ENCODE measurements at regions of chr9 and their contacts with region 1.

Region 1: GRCh38 chr9:29830821-29831220 is 2257.5 kb upstream of the C9orf72 start:
- DNase-seq: peak; percentile 37
- H3K4me3 ChIP-seq: no peak overlapping the region
- H3K27ac ChIP-seq: no peak overlapping the region
- H3K4me1 ChIP-seq: no peaks in the 10 kb centered on the region
- H3K27me3 ChIP-seq: peaks cover 2% of the 10 kb centered on the region
- CTCF ChIP-seq: peak; percentile 54 to 71

Region 2: DNA sequence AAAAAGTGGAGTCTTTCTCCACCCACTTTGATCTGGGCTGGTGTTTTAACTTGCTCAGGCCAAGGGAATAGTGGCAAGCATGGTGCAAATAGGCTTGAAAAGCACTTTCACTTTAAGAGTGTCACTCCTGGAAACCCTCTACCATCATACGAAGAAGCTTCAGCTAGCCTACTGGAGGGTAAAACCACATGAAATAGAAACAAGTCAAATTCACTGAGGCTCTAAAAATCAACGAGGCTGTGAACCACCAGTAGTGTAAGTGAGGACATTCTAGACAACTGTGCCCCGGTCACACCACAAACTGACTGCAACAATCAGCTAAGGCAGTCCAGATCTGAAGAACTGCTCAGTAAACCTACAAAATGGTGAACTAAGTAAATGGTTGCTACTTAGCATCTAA is 108.7 kb after region 1 on chr9:
- CTCF ChIA-PET with region 1: no interaction called
- dilution Hi-C with region 1: no loop called
- in situ Hi-C with region 1: no loop called
- intact Hi-C with region 1: no loop called
- DNase-seq: no peak
- H3K4me3 ChIP-seq: no peak overlapping the region
- H3K27ac ChIP-seq: no peak overlapping the region
- H3K4me1 ChIP-seq: no peaks in the 10 kb centered on the region
- H3K27me3 ChIP-seq: no peaks in the 10 kb centered on the region
- CTCF ChIP-seq: no peak

Region 3: GRCh38 chr9:30774326-30774725 is 943.5 kb after region 1 on chr9:
- CTCF ChIA-PET with region 1: no interaction called
- dilution Hi-C with region 1: no loop called
- in situ Hi-C with region 1: no loop called
- intact Hi-C with region 1: loop called (anchors 10 kb)
- DNase-seq: no peak
- H3K4me3 ChIP-seq: no peak overlapping the region
- H3K27ac ChIP-seq: no peak overlapping the region
- H3K4me1 ChIP-seq: no peaks in the 10 kb centered on the region
- H3K27me3 ChIP-seq: no peaks in the 10 kb centered on the region
- CTCF ChIP-seq: no peak

Region 4: DNA sequence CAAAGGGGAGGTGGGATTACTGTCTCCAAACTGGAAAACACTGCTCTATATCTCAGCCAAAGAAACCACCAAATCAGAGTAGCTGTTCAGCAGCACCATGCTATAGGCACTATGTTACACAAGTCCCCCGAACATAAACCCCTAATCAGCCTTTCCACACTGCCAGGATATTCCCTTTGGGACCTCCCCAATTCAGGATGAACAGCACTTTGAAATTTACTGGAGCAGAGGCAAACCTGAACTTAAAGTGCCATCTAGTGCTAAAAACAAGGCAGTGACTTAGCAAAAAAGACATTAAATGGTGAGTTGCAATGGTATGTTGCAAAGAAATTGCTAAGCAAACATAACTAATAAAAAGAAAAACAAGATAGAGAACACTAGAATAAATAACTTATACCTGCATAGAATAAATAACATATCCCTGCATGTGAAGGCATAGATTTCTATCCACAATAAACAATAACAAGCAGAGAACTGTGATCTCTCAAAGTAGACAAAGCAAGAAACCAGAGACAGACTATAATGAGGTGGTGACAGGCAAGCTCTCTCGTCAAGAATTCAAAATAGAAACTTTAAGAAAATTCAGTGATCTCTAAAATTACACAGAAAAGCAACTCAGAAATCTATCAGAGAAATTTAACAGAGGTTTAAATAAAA is 1969.3 kb after region 1 on chr9:
- CTCF ChIA-PET with region 1: no interaction called
- dilution Hi-C with region 1: no loop called
- in situ Hi-C with region 1: loop called in 1 of 2 experiments (anchors 25 kb)
- intact Hi-C with region 1: loop called (anchors 1 kb)
- DNase-seq: peak; percentile 41
- H3K4me3 ChIP-seq: no peak overlapping the region
- H3K27ac ChIP-seq: no peak overlapping the region
- H3K4me1 ChIP-seq: no peaks in the 10 kb centered on the region
- H3K27me3 ChIP-seq: no peaks in the 10 kb centered on the region
- CTCF ChIP-seq: peak; percentile 73 to 78